ENCODE measurements at regions of chr13 and their contacts with region 1.

Region 1: DNA sequence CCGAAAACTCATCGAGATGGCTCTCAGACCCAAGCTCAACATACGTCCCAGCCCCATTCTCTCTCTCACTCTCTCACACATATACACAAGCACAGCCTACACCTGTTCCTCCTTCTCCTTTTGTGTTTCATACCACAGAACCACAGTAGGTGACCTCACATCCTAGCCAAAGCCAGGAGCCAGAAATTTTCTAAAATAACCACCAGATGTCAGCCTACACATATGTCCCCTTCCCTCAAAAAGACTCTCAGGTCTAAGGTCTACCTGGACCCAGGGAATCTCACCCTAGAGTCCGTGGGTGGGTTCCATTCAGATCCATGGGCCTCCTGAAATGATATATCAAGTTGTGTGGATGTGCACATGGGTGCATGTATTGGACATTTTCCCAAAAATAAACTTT is 104.2 kb upstream of the IPO5 start:
- DNase-seq: peak; percentile 45
- H3K4me3 Mint-ChIP-seq: no peak overlapping the region
- H3K27ac Mint-ChIP-seq: no peak overlapping the region
- H3K4me1 Mint-ChIP-seq: peaks cover 14% of the 10 kb centered on the region
- H3K27me3 Mint-ChIP-seq: peaks cover 4% of the 10 kb centered on the region
- CTCF ChIP-seq: peak; percentile 50

Region 2: GRCh38 chr13:97834250-97834649 is 15.1 kb before region 1 on chr13:
- CTCF ChIA-PET with region 1: interaction called, 17 read pairs
- POLR2A ChIA-PET with region 1: no interaction called
- intact Hi-C with region 1: no loop called
- DNase-seq: peak; percentile 9
- H3K4me3 Mint-ChIP-seq: no peak overlapping the region
- H3K27ac Mint-ChIP-seq: no peak overlapping the region
- H3K4me1 Mint-ChIP-seq: no peaks in the 10 kb centered on the region
- H3K27me3 Mint-ChIP-seq: peaks cover 23% of the 10 kb centered on the region
- CTCF ChIP-seq: no peak

Region 3: DNA sequence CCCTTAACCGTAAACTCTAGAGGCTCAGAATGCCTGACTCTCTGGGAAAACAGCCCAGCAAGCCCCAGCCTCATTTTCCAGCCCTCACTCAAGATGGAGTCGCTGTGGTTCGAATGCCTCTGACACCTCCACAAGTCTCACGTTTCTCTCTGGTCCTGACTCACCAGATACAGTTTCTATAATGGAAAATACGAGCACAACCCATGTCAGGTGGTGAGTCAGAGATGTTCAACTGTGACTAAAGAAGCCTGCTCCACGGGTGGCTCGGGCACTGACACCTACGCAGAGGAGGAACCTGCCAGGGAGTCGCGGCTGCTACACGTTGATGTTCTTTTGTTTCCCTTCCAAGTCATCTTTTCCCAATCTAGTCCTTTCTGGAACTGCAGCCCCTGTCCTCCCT is 814.7 kb after region 1 on chr13:
- CTCF ChIA-PET with region 1: no interaction called
- POLR2A ChIA-PET with region 1: no interaction called
- intact Hi-C with region 1: no loop called
- DNase-seq: peak; percentile 91
- H3K4me3 Mint-ChIP-seq: no peak overlapping the region
- H3K27ac Mint-ChIP-seq: no peak overlapping the region
- H3K4me1 Mint-ChIP-seq: peaks cover 9% of the 10 kb centered on the region
- H3K27me3 Mint-ChIP-seq: peaks cover 21% of the 10 kb centered on the region
- CTCF ChIP-seq: no peak